OCI-LY7 (cell line): ENCODE measurements at regions of chr1 and their contacts with region 1.

Region 1: GRCh38 chr1:205750138-205751035 is at the start of gene NUCKS1:
- DNase-seq: peak; percentile 100
- H3K4me3 ChIP-seq: peak within 1 kb of the TSS; percentile 95
- H3K27ac ChIP-seq: peak within 1 kb of the TSS; percentile 86
- H3K4me1 ChIP-seq: peaks cover 35% of the 10 kb centered on the region
- CTCF ChIP-seq: no peak
- total RNA-seq, gene NUCKS1: 152 and 238 TPM in 2 replicates

Region 2: GRCh38 chr1:205504311-205504984 is 245.9 kb before region 1 on chr1 and contains the start of gene CDK18:
- CTCF ChIA-PET with region 1: no interaction called
- POLR2A ChIA-PET with region 1: no interaction called
- intact Hi-C with region 1: no loop called
- DNase-seq: peak; percentile 80
- H3K4me3 ChIP-seq: peak within 1 kb of the TSS; percentile 72
- H3K27ac ChIP-seq: peak within 1 kb of the TSS; percentile 12
- H3K4me1 ChIP-seq: peaks cover 24% of the 10 kb centered on the region
- CTCF ChIP-seq: no peak
- total RNA-seq, gene CDK18: 10.1 and 10.9 TPM in 2 replicates

Region 3: DNA sequence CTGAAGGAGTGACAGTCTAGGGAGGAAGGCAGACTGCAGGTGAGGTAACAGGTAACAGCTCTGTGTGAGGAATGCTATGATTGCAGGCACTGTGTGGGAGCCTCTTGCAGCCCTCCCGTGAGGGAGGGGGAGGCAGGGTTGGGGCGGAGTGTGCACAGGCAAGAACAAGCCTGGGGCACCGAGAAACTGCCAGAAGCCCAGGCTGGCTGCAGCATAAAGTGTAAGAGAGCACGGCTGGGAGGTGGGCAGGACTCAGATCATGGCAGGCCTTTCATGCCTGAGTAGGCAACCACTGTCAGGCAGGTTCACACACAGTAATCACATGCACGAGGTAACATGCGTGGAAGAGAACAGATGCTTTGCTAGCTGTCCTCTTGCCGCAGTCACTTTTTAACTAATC is 291.3 kb after region 1 on chr1:
- CTCF ChIA-PET with region 1: no interaction called
- POLR2A ChIA-PET with region 1: no interaction called
- intact Hi-C with region 1: loop called (anchors 5 kb)
- DNase-seq: peak; percentile 53
- H3K4me3 ChIP-seq: peak overlapping the region; percentile 36
- H3K27ac ChIP-seq: peak overlapping the region; percentile 10
- H3K4me1 ChIP-seq: peaks cover 80% of the 10 kb centered on the region
- CTCF ChIP-seq: no peak